WTC11 (cell line): ENCODE measurements at regions of chr12 and their contacts with region 1.

Region 1: GRCh38 chr12:109719236-109720022 is 5.8 kb downstream of the FAM222A start:
- DNase-seq: peak; percentile 45
- ATAC-seq: peak; percentile 57
- H3K4me3 Mint-ChIP-seq: peak overlapping the region; percentile 50
- H3K27ac Mint-ChIP-seq: peak overlapping the region; percentile 77; the same call in 1 of the 2 replicates
- H3K4me1 Mint-ChIP-seq: peaks cover 25% of the 10 kb centered on the region
- H3K27me3 Mint-ChIP-seq: peaks cover 41% of the 10 kb centered on the region
- CTCF ChIP-seq: no peak

Region 2: GRCh38 chr12:109752117-109753053 is 33.0 kb after region 1 on chr12:
- CTCF ChIA-PET with region 1: interaction called, 11 read pairs
- POLR2A ChIA-PET with region 1: no interaction called
- DNase-seq: peak; percentile 3
- ATAC-seq: no peak
- H3K4me3 Mint-ChIP-seq: no peak overlapping the region
- H3K27ac Mint-ChIP-seq: no peak overlapping the region
- H3K4me1 Mint-ChIP-seq: no peaks in the 10 kb centered on the region
- H3K27me3 Mint-ChIP-seq: no peaks in the 10 kb centered on the region
- CTCF ChIP-seq: no peak

Region 3: GRCh38 chr12:109763201-109763841 is 43.9 kb after region 1 on chr12:
- CTCF ChIA-PET with region 1: interaction called, 26 read pairs
- POLR2A ChIA-PET with region 1: no interaction called
- DNase-seq: no peak
- ATAC-seq: no peak
- H3K4me3 Mint-ChIP-seq: no peak overlapping the region
- H3K27ac Mint-ChIP-seq: no peak overlapping the region
- H3K4me1 Mint-ChIP-seq: peaks cover 10% of the 10 kb centered on the region
- H3K27me3 Mint-ChIP-seq: no peaks in the 10 kb centered on the region
- CTCF ChIP-seq: no peak